ENCODE measurements at regions of chr3 and their contacts with region 1.

Region 1: GRCh38 chr3:8441969-8442559 is 59.6 kb upstream of the LMCD1 start:
- DNase-seq: peak; percentile 77
- ATAC-seq: peak; percentile 30; the same call in 1 of the 2 replicates
- H3K4me3 ChIP-seq: no peak overlapping the region
- H3K27ac ChIP-seq: peak overlapping the region; percentile 40; the same call in 1 of the 2 replicates
- H3K4me1 ChIP-seq: peaks cover 21% of the 10 kb centered on the region
- H3K27me3 ChIP-seq: peaks cover 2% of the 10 kb centered on the region; the same call in 1 of the 2 replicates
- CTCF ChIP-seq: peak; percentile 84
- POLR2A ChIP-seq: no peak
- RAD21 ChIP-seq: peak; percentile 87

Region 2: GRCh38 chr3:8482960-8483665 is 41.0 kb after region 1 on chr3:
- CTCF ChIA-PET with region 1: no interaction called
- POLR2A ChIA-PET with region 1: no interaction called
- dilution Hi-C with region 1: no loop called
- in situ Hi-C with region 1: no loop called
- intact Hi-C with region 1: loop called (anchors 1 kb)
- DNase-seq: peak; percentile 97
- ATAC-seq: peak; percentile 92
- H3K4me3 ChIP-seq: no peak overlapping the region
- H3K27ac ChIP-seq: peak overlapping the region; percentile 79
- H3K4me1 ChIP-seq: peaks cover 14% of the 10 kb centered on the region
- H3K27me3 ChIP-seq: no peaks in the 10 kb centered on the region
- CTCF ChIP-seq: no peak
- POLR2A ChIP-seq: 0 out of 2 replicates have a peak, but pooled peaks have one; percentile 20
- RAD21 ChIP-seq: peak; percentile 18; the same call in 1 of the 2 replicates

Region 3: DNA sequence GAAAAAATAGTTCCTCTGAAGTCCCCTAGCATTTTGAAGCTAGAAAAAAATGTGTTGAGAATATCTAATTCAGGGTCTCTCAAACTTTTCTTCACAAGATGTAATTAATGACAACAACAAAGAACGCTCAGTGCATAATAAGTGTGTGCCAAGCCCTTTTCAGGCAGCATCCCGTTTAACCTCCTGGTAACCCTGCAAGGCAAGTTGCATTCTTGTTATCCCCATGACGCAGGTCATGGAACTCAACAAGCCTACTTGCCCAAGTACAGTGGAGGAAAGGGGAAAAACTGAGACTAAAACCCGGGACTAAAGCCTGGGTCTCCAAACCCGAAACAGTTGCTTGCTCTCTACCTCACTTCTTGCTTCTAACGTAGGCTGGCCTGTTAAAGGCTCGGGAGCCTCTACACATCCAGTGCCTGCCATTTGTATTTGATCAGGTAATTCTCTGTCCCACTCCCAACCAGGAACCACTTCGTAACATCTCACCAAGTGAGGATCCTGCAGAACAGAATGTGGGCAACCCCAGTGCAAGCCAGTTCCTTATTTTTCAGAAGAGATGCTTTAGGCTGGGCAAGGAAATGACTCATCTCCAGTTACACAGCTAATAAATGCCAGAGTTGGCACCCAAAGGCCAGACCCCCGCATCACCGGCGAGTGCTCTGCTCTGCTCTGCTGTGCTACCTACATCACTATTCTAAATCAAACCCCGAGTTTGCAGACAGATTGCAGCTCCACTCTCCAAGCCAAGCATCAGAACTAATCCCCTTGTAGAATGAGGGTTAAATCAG is 87.9 kb after region 1 on chr3:
- CTCF ChIA-PET with region 1: interaction called, 3 read pairs
- POLR2A ChIA-PET with region 1: no interaction called
- dilution Hi-C with region 1: no loop called
- in situ Hi-C with region 1: no loop called
- intact Hi-C with region 1: loop called (anchors 10 kb)
- DNase-seq: no peak
- ATAC-seq: no peak
- H3K4me3 ChIP-seq: no peak overlapping the region
- H3K27ac ChIP-seq: no peak overlapping the region; the same call in 1 of the 2 replicates
- H3K4me1 ChIP-seq: peaks cover 31% of the 10 kb centered on the region
- H3K27me3 ChIP-seq: no peaks in the 10 kb centered on the region
- CTCF ChIP-seq: no peak
- POLR2A ChIP-seq: no peak
- RAD21 ChIP-seq: no peak

Region 4: GRCh38 chr3:8579096-8579495 is 137.0 kb after region 1 on chr3:
- CTCF ChIA-PET with region 1: no interaction called
- POLR2A ChIA-PET with region 1: no interaction called
- dilution Hi-C with region 1: no loop called
- in situ Hi-C with region 1: no loop called
- intact Hi-C with region 1: loop called (anchors 1 kb)
- DNase-seq: peak; percentile 42
- ATAC-seq: no peak
- H3K4me3 ChIP-seq: no peak overlapping the region
- H3K27ac ChIP-seq: no peak overlapping the region
- H3K4me1 ChIP-seq: peaks cover 32% of the 10 kb centered on the region
- H3K27me3 ChIP-seq: no peaks in the 10 kb centered on the region
- CTCF ChIP-seq: no peak
- POLR2A ChIP-seq: no peak
- RAD21 ChIP-seq: no peak

Region 5: DNA sequence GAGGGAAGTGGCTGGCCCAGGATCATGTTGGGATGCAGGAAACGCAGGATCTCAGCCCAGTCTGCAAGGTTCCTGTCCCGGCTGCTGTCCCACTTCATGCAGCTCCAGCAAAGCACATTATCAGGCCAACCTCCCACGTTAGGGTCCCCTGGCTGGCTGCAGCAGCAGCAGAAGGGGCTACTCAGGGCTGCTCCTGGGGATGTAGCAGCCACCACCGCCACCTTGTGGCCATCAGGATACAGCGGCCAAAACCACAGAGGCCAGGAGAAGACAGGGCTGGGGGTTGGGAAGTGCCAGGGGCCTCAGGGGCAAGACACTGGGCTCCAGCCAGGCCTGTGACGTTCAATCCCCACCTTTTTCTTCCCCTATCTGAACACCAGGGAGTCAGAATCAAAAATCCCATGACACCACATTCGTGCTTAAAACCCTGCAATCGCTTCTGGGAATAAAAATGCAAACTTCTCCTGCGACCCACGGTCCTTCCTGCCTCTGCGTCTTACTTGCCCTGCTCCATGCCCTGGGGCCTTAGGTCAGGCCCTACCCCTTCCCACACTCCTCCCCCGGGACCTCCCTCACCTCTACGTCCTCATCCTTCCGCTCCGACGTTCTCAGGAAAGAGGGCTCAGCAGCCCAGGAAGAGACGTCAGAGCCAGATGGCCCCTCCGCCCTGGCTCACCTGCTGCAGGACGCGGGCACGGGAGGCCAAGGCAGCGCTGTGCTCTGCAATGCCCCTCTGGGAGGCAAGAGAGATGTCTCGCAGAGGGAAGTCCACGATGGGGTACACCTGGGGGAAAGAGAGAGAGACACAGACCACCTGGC is 181.0 kb after region 1 on chr3:
- CTCF ChIA-PET with region 1: interaction called, 7 read pairs
- POLR2A ChIA-PET with region 1: no interaction called
- dilution Hi-C with region 1: no loop called
- in situ Hi-C with region 1: loop called (anchors 5 kb)
- intact Hi-C with region 1: loop called (anchors 1 kb)
- DNase-seq: peak; percentile 70
- ATAC-seq: peak; percentile 91
- H3K4me3 ChIP-seq: no peak overlapping the region
- H3K27ac ChIP-seq: no peak overlapping the region
- H3K4me1 ChIP-seq: peaks cover 32% of the 10 kb centered on the region
- H3K27me3 ChIP-seq: no peaks in the 10 kb centered on the region; the same call in 1 of the 2 replicates
- CTCF ChIP-seq: peak; percentile 94
- POLR2A ChIP-seq: no peak
- RAD21 ChIP-seq: peak; percentile 94

Region 6: GRCh38 chr3:8851719-8852118 is 409.7 kb after region 1 on chr3:
- CTCF ChIA-PET with region 1: no interaction called
- POLR2A ChIA-PET with region 1: no interaction called
- dilution Hi-C with region 1: no loop called
- in situ Hi-C with region 1: no loop called
- intact Hi-C with region 1: loop called (anchors 10 kb)
- DNase-seq: peak; percentile 74
- ATAC-seq: peak; percentile 70
- H3K4me3 ChIP-seq: no peak overlapping the region
- H3K27ac ChIP-seq: no peak overlapping the region
- H3K4me1 ChIP-seq: peaks cover 16% of the 10 kb centered on the region
- H3K27me3 ChIP-seq: no peaks in the 10 kb centered on the region
- CTCF ChIP-seq: no peak
- POLR2A ChIP-seq: no peak
- RAD21 ChIP-seq: no peak

Region 7: GRCh38 chr3:9067352-9067975 is 625.4 kb after region 1 on chr3:
- CTCF ChIA-PET with region 1: no interaction called
- POLR2A ChIA-PET with region 1: no interaction called
- dilution Hi-C with region 1: no loop called
- in situ Hi-C with region 1: no loop called
- intact Hi-C with region 1: loop called (anchors 5 kb)
- DNase-seq: peak; percentile 71
- ATAC-seq: peak; percentile 92
- H3K4me3 ChIP-seq: no peak overlapping the region
- H3K27ac ChIP-seq: no peak overlapping the region
- H3K4me1 ChIP-seq: no peaks in the 10 kb centered on the region
- H3K27me3 ChIP-seq: peaks cover 14% of the 10 kb centered on the region
- CTCF ChIP-seq: peak; percentile 96
- POLR2A ChIP-seq: peak; percentile 56; the same call in 1 of the 2 replicates
- RAD21 ChIP-seq: peak; percentile 92

Measured in IMR-90 (cell line).